Activated CD8-positive, alpha-beta T cell treated with anti-CD3 and anti-CD28 coated beads, Interleukin-2, amount 10 ng/mL, durations not matched to agents 7 days and 5 days (primary cell): ENCODE measurements at regions of chr1 and their contacts with region 1.

Region 1: DNA sequence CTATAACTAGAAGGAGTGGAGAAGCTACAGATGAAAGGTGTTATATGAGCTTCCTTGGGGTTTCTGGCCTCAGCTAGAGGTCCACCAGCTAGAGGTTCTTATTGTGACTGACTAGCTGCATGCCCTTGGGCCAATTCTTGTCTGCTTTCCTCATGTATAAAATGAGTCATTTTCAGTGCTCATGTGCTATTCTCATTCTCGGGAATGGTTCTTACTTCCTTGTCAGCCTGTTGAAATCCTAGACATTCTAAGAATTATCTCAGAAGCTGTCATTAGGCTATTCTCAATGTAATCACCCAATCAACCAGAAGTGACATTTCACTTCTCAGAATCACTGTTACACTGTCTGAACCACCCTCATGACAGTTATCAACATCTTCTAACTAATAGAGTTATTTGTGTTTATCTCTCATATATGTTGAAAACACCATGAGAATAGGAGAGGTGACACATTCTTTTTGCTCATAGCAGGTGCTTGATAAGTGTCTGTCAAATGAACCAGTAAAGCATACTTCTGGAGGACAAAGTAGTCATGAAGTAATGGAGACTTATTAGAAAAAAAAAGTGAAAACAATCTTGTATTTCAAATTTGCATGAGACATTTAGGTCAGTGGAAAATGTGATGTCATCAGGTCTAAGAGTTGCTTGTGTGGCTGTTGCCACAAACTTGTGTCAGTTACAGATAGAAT is 122.8 kb upstream of the IVNS1ABP start:
- DNase-seq: peak; percentile 72
- ATAC-seq: peak; percentile 83
- H3K4me3 Mint-ChIP-seq: no peak overlapping the region
- H3K27ac Mint-ChIP-seq: no peak overlapping the region
- H3K4me1 Mint-ChIP-seq: peaks cover 36% of the 10 kb centered on the region
- H3K27me3 Mint-ChIP-seq: no peaks in the 10 kb centered on the region

Region 2: GRCh38 chr1:185420588-185421081 is 19.2 kb before region 1 on chr1:
- CTCF ChIA-PET with region 1: interaction called, 15 read pairs
- POLR2A ChIA-PET with region 1: interaction called, 42 read pairs
- DNase-seq: peak; percentile 80
- ATAC-seq: peak; percentile 87
- H3K4me3 Mint-ChIP-seq: peak overlapping the region; percentile 60
- H3K27ac Mint-ChIP-seq: peak overlapping the region; percentile 96
- H3K4me1 Mint-ChIP-seq: peaks cover 88% of the 10 kb centered on the region
- H3K27me3 Mint-ChIP-seq: no peaks in the 10 kb centered on the region

Region 3: DNA sequence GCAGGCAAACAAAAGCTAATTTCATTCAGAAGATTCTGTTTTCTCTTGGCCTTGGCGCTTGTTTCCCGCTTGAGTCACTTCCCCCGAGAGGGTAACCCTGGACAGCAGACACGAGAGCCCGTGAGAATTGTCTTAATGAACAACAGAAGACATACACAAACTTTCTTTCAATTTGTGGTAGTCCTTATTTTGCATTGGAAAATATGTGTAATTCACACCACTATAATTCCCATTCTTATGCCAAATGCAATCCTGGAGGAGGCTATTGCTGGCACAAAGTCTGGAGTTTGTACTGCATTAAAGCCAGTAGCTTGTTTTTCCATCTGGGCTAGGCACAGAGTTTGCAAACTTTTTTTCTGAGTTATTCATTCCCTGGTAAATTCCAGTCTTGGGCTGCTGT is 13.0 kb before region 1 on chr1:
- CTCF ChIA-PET with region 1: interaction called, 11 read pairs
- POLR2A ChIA-PET with region 1: interaction called, 42 read pairs
- DNase-seq: no peak
- ATAC-seq: no peak
- H3K4me3 Mint-ChIP-seq: no peak overlapping the region
- H3K27ac Mint-ChIP-seq: peak overlapping the region; percentile 37
- H3K4me1 Mint-ChIP-seq: peaks cover 82% of the 10 kb centered on the region
- H3K27me3 Mint-ChIP-seq: no peaks in the 10 kb centered on the region

Region 4: DNA sequence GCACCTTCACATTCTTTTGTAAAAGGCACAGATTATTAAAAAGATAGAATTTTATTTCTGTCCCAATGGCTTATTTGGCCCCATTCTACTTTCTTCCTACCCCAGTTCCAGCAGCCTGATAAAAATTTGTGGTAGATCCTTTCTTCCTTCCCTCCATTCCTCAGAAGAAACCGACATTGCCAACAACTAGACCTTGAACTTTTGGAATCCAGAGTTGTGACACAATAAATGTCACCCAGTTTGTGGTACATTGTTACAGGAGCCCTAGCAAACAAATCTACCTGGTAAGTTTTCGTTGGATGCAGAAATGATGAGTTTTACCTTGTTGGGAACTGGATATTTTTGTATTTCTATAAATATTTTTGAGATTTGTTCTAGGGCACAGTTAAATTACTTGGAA is 18.8 kb after region 1 on chr1:
- CTCF ChIA-PET with region 1: no interaction called
- POLR2A ChIA-PET with region 1: no interaction called
- DNase-seq: no peak
- ATAC-seq: no peak
- H3K4me3 Mint-ChIP-seq: no peak overlapping the region
- H3K27ac Mint-ChIP-seq: no peak overlapping the region
- H3K4me1 Mint-ChIP-seq: peaks cover 6% of the 10 kb centered on the region
- H3K27me3 Mint-ChIP-seq: no peaks in the 10 kb centered on the region